ENCODE measurements at regions of chr19 and their contacts with region 1.

Region 1: GRCh38 chr19:12333162-12334159 is at the start of gene ZNF563:
- DNase-seq: peak; percentile 93
- ATAC-seq: peak; percentile 86
- H3K4me3 Mint-ChIP-seq: peak within 1 kb of the TSS; percentile 96
- H3K27ac Mint-ChIP-seq: peak within 1 kb of the TSS; percentile 92
- H3K4me1 Mint-ChIP-seq: peaks cover 39% of the 10 kb centered on the region
- H3K27me3 Mint-ChIP-seq: no peaks in the 10 kb centered on the region
- CTCF ChIP-seq: no peak
- total RNA-seq, gene ZNF563: 3.6 and 3.7 TPM in 2 replicates

Region 2: DNA sequence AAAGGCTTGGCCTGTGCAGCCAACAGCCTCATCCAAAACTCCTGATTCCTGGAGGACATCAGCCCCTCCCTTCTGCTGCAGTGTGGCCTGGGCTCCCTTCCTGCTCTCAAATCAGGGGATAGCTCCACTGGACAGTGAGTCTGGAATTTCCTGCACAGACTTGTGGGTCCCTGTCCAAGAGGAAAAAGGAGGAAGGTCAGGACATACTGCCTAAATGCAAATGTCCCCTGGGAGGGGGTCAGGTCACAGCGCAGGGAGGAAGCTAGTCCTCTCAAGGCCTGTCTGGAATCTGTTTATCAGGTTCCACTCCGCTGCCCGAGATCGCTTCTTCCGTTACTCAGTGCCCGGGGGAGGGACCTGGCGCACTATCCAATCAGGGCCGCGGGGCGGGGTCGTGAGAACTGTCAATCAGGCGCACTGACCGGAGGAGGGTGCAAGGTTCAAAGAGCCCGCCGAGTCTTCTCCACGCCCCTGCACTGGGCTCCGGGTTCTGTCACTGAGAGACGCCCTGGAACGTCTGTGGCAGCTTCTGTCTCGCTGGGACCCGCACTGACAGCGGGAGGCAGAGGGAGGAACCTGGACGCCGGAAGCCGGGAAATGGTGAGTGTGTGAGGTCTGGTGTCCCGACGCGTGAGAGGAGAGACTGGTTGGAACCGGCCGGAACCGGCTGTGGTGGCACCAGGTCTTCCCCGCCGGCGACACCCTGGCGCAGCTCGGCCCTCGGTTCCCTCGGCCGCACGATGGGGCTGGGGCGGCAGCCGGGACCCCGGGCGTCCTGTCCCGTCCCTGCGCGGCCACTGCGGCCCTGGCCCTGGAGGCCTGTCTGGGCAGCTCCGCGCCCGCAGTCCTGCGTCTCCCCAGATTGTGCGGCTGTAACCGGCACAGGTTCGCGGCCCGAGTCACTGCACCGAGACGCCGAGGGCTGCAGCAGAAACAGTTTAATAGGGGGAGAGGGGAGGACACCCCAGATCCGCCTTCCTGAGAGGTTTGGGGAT is 566.6 kb before region 1 on chr19 and contains the start of gene ZNF441:
- CTCF ChIA-PET with region 1: no interaction called
- POLR2A ChIA-PET with region 1: interaction called, 10 read pairs
- intact Hi-C with region 1: no loop called
- DNase-seq: peak; percentile 87
- ATAC-seq: peak; percentile 95
- H3K4me3 Mint-ChIP-seq: peak within 1 kb of the TSS; percentile 99
- H3K27ac Mint-ChIP-seq: peak within 1 kb of the TSS; percentile 96
- H3K4me1 Mint-ChIP-seq: peaks cover 25% of the 10 kb centered on the region
- H3K27me3 Mint-ChIP-seq: peaks cover 2% of the 10 kb centered on the region
- CTCF ChIP-seq: no peak
- total RNA-seq, gene ZNF441: 23.3 and 23.9 TPM in 2 replicates

Region 3: DNA sequence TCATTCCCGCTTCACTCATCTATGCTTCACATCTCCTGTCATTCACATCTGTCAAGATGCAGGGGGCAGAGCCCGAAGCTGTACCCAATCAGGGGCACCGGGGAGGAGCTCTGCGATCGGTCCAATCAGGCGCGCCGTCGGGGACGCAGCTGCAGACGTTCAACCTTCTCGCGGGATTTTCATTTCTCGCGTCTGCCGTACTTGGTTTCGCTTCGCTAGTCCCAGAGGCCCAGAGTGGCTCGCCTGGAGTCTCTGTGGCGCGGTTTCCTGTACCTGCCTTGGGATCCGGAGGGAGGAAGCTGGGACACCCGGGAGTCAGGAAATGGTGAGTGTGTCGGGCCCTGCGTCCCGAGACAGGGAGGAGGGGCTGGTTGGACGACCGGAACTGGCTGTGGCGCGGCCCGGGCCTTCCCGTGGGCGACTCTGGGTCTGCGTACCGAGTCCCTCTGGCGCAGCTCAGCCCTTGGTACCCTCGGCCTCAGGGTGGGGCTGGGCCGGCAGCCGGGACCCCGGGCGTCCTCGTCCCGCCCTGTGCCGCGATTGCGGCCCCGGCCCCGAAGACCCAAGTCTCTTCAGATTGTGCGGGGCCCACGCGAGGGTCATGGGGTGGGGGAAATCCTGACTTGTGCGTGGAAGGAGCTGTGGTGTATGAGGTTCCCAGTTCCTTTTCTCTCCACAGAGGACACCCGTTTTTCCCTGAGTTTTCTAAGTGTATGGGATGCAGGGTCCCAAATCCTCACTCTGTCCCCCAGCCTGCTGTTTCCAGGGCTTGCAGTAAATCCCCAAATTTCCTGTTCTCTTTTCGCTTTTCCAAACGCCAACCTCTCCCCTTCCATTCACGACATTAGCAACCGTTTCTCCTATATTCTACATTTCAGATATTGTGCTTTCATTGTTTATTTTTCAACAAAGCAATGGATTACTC is 170.3 kb before region 1 on chr19 and contains the start of gene ZNF136:
- CTCF ChIA-PET with region 1: no interaction called
- POLR2A ChIA-PET with region 1: interaction called, 21 read pairs
- intact Hi-C with region 1: loop called (anchors 2 kb)
- DNase-seq: peak; percentile 83
- ATAC-seq: peak; percentile 99
- H3K4me3 Mint-ChIP-seq: peak within 1 kb of the TSS; percentile 96
- H3K27ac Mint-ChIP-seq: peak within 1 kb of the TSS; percentile 97
- H3K4me1 Mint-ChIP-seq: peaks cover 44% of the 10 kb centered on the region
- H3K27me3 Mint-ChIP-seq: no peaks in the 10 kb centered on the region
- CTCF ChIP-seq: no peak
- total RNA-seq, gene ZNF136: 20.4 and 24.6 TPM in 2 replicates

Region 4: GRCh38 chr19:12294249-12295158 is 39.0 kb before region 1 on chr19 and contains the start of gene ZNF44:
- CTCF ChIA-PET with region 1: no interaction called
- POLR2A ChIA-PET with region 1: interaction called, 67 read pairs
- intact Hi-C with region 1: loop called (anchors 1 kb)
- DNase-seq: peak; percentile 87
- ATAC-seq: peak; percentile 93
- H3K4me3 Mint-ChIP-seq: peak within 1 kb of the TSS; percentile 99
- H3K27ac Mint-ChIP-seq: peak within 1 kb of the TSS; percentile 95
- H3K4me1 Mint-ChIP-seq: peaks cover 35% of the 10 kb centered on the region
- H3K27me3 Mint-ChIP-seq: no peaks in the 10 kb centered on the region
- CTCF ChIP-seq: no peak
- total RNA-seq, gene ZNF44: 20.6 and 26.4 TPM in 2 replicates

Region 5: GRCh38 chr19:12365236-12366162 is 32.0 kb after region 1 on chr19 and contains the start of gene ZNF442:
- CTCF ChIA-PET with region 1: interaction called, 7 read pairs
- POLR2A ChIA-PET with region 1: interaction called, 40 read pairs
- intact Hi-C with region 1: loop called (anchors 1 kb)
- DNase-seq: peak; percentile 68
- ATAC-seq: peak; percentile 97
- H3K4me3 Mint-ChIP-seq: peak within 1 kb of the TSS; percentile 96
- H3K27ac Mint-ChIP-seq: peak within 1 kb of the TSS; percentile 91
- H3K4me1 Mint-ChIP-seq: peaks cover 25% of the 10 kb centered on the region
- H3K27me3 Mint-ChIP-seq: no peaks in the 10 kb centered on the region
- CTCF ChIP-seq: no peak
- total RNA-seq, gene ZNF442: 6.9 and 8.7 TPM in 2 replicates

Region 6: GRCh38 chr19:12440541-12441316 is 107.3 kb after region 1 on chr19 and contains the start of gene ZNF443:
- CTCF ChIA-PET with region 1: no interaction called
- POLR2A ChIA-PET with region 1: interaction called, 5 read pairs
- intact Hi-C with region 1: loop called (anchors 2 kb)
- DNase-seq: peak; percentile 98
- ATAC-seq: peak; percentile 95
- H3K4me3 Mint-ChIP-seq: peak within 1 kb of the TSS; percentile 100
- H3K27ac Mint-ChIP-seq: peak within 1 kb of the TSS; percentile 89
- H3K4me1 Mint-ChIP-seq: peaks cover 27% of the 10 kb centered on the region
- H3K27me3 Mint-ChIP-seq: no peaks in the 10 kb centered on the region
- CTCF ChIP-seq: no peak
- total RNA-seq, gene ZNF443: 3.5 and 3.6 TPM in 2 replicates

Region 7: DNA sequence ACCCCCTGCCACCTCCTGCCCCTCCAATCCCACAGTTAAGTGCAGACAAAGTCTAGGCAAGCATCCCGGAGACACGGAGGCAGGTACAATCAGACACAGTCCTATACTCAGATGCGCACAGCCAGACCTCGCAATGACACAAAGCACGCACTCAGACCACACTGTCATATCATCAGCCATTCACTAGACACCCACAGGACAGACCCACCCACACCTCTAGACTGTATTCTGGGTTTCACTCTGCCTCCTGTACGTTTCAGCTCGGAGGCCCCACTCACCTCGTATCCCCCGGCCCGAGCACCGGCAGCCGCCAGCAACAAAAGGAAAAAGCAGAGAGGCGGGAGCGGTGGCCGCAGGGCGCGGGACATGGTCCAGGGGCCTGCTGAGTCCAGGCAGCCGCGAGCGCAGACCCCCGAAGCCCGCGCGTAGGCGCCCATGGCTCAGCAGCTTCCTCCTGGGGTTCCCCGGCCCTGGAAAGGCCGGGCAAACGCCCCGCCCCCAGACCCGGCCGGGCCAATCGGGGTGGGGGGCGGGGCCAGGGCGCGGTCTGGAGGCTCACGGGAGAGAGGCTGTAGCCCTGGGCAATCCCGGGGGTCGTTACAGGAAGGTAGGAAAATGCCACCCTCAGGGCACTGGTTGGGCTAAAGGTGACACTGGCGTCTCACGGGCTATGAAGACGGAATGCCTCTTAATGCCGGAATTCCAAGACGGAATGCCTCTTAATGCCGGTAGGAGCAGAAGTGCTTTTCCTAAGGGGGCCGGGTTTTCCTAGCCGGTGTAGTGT is 333.0 kb after region 1 on chr19 and contains the starts of genes MAN2B1 and WDR83:
- CTCF ChIA-PET with region 1: no interaction called
- POLR2A ChIA-PET with region 1: no interaction called
- intact Hi-C with region 1: loop called (anchors 5 kb)
- DNase-seq: peak; percentile 83
- ATAC-seq: peak; percentile 70
- H3K4me3 Mint-ChIP-seq: peak within 1 kb of the TSS; percentile 97
- H3K27ac Mint-ChIP-seq: peak within 1 kb of the TSS; percentile 93
- H3K4me1 Mint-ChIP-seq: peaks cover 69% of the 10 kb centered on the region
- H3K27me3 Mint-ChIP-seq: no peaks in the 10 kb centered on the region
- CTCF ChIP-seq: no peak
- total RNA-seq, gene MAN2B1: 251 and 291 TPM in 2 replicates
- total RNA-seq, gene WDR83: 17.7 and 20.8 TPM in 2 replicates

Measured in activated B cell treated with CpG ODN at 0.5 μM for 24 hours (primary cell).